Cardiac septum (tissue), 1 donor: ENCODE measurements at regions of chr6 and their contacts with region 1.

Region 1: GRCh38 chr6:36678518-36679027 is at the start of gene CDKN1A:
- DNase-seq: peak; percentile 94
- total RNA-seq, gene CDKN1A: 113 TPM

Region 2: GRCh38 chr6:36442671-36443470 is 235.7 kb before region 1 on chr6 and contains the starts of genes KCTD20 and PXT1:
- intact Hi-C with region 1: loop called (anchors 5 kb)
- DNase-seq: peak; percentile 94
- total RNA-seq, gene KCTD20: 29.6 TPM
- total RNA-seq, gene PXT1: 0.22 TPM

Region 3: GRCh38 chr6:36546920-36547645 is 131.5 kb before region 1 on chr6 and contains the start of gene STK38:
- intact Hi-C with region 1: loop called (anchors 2 kb)
- DNase-seq: peak; percentile 98
- total RNA-seq, gene STK38: 31.6 TPM

Region 4: GRCh38 chr6:36623547-36624459 is 54.8 kb before region 1 on chr6:
- intact Hi-C with region 1: loop called (anchors 1 kb)
- DNase-seq: peak; percentile 90

Region 5: GRCh38 chr6:36735110-36736071 is 56.8 kb after region 1 on chr6:
- intact Hi-C with region 1: loop called (anchors 2 kb)
- DNase-seq: peak; percentile 92

Region 6: DNA sequence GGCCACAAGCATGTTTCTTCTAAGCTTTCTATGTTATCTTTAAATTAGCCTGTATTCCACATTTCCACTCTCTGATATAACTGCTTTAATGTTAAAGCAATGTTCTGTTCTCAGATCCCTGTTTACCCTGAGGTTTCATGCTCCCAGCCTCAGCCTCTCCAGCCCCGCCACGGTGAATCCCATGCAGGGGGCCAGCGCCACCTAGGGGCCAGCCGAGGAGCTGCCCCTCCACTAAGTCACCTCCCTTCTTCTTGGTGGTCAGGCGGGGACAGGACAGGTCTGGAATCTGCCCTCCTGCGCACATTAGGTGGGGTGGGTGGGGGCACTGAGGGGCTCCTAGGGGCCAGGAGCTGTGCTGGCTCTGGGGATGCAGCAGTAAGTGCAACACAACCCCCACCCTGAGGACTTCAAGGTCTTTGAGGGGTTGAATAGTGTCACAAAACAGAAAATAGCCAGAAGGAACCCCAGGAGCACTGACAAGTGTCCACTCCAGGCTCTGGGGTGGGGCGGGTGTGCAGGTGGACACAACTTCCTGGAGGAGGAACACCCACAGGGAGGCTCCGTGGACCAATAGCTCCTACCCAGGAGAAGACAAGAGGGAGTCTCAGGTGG is 80.7 kb after region 1 on chr6:
- intact Hi-C with region 1: loop called (anchors 5 kb)
- DNase-seq: peak; percentile 93

Region 7: DNA sequence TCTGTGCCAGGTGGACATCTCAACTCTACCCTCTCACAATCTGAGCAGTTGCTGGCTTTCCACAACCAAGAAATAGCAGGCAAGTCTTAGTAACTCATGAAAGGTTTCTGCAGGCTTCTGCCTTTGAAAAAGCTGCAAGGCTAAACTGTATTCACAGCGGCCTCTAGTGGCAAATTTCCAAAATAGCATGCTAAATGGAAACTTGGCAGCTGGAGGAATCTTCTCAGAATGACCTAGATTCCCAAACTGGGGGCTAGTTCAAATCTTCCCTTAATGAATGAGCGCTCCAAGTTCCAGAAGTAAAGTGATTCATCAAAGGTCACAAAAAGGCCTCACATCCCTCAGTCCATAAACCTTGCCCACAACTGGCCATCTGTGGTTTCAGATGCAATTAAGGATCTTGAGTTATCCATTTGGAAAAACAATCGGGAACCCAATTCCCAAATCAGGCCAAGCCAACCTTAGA is 172.6 kb after region 1 on chr6:
- intact Hi-C with region 1: loop called (anchors 5 kb)
- DNase-seq: no peak